ENCODE measurements at regions of chr15 and their contacts with region 1.

Region 1: GRCh38 chr15:63752075-63752684 is 81.6 kb downstream of the HERC1 start:
- DNase-seq: peak; percentile 54
- H3K4me3 ChIP-seq: no peak overlapping the region; a peak in 1 of 4 replicates
- H3K27ac ChIP-seq: no peak overlapping the region
- H3K4me1 ChIP-seq: no peaks in the 10 kb centered on the region; a peak in 1 of 4 replicates
- H3K27me3 ChIP-seq: no peaks in the 10 kb centered on the region
- CTCF ChIP-seq: peak; percentile 83
- EP300 ChIP-seq: no peak
- RAD21 ChIP-seq: peak; percentile 94

Region 2: GRCh38 chr15:63729115-63729884 is 22.9 kb before region 1 on chr15:
- CTCF ChIA-PET with region 1: interaction called, 13 read pairs
- POLR2A ChIA-PET with region 1: no interaction called
- DNase-seq: no peak
- H3K4me3 ChIP-seq: no peak overlapping the region
- H3K27ac ChIP-seq: no peak overlapping the region
- H3K4me1 ChIP-seq: peaks cover 0 to 4% of the 10 kb centered on the region in 2 experiments; a peak in 2 of 4 replicates
- H3K27me3 ChIP-seq: no peaks in the 10 kb centered on the region
- CTCF ChIP-seq: no peak
- EP300 ChIP-seq: no peak
- RAD21 ChIP-seq: no peak

Region 3: DNA sequence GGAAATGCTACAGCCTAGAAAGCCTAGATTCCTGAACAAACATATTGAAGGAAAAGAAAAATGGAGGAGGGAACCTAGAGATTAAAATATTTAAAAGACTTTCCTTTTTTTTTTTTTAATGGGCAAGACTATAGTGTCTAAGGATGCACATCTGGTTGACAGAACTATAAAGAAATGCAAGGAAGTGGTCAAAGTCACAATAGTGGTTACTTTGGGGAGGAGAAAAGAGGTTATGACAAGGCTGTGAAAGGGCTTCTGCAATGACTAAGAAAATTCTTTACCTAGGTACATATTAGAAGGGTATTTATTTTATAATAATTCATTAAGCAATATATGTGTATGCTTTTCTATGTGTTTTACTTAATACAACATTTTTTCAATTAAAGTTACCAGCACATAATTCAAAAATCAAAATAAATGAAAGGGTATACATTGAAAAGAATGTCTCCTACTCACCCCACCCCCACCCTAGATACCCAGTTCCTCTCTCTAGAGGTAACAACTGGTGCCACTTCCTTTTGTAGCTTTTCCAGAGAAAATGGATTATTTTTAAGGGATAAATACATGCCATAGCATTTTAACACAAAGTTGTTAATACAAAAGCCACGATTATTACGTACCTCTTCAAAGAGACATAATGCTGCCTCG is 11.4 kb after region 1 on chr15:
- CTCF ChIA-PET with region 1: interaction called, 33 read pairs
- POLR2A ChIA-PET with region 1: no interaction called
- DNase-seq: no peak
- H3K4me3 ChIP-seq: no peak overlapping the region
- H3K27ac ChIP-seq: no peak overlapping the region
- H3K4me1 ChIP-seq: peaks cover 0 to 5% of the 10 kb centered on the region in 2 experiments; a peak in 1 of 4 replicates
- H3K27me3 ChIP-seq: no peaks in the 10 kb centered on the region
- CTCF ChIP-seq: no peak
- EP300 ChIP-seq: no peak
- RAD21 ChIP-seq: no peak

Region 4: GRCh38 chr15:63833021-63833696 is 81.0 kb after region 1 on chr15:
- CTCF ChIA-PET with region 1: interaction called, 10 read pairs
- POLR2A ChIA-PET with region 1: no interaction called
- DNase-seq: peak; percentile 80
- H3K4me3 ChIP-seq: peak overlapping the region; percentile 89
- H3K27ac ChIP-seq: peak overlapping the region; percentile 64 to 95; a peak in 3 of 4 replicates
- H3K4me1 ChIP-seq: peaks cover 10 to 11% of the 10 kb centered on the region in 2 experiments; a peak in 3 of 4 replicates
- H3K27me3 ChIP-seq: no peaks in the 10 kb centered on the region
- CTCF ChIP-seq: no peak
- EP300 ChIP-seq: no peak
- RAD21 ChIP-seq: no peak

Region 5: GRCh38 chr15:63881431-63881830 is 129.3 kb after region 1 on chr15:
- CTCF ChIA-PET with region 1: interaction called, 15 read pairs
- POLR2A ChIA-PET with region 1: interaction called, 3 read pairs
- DNase-seq: no peak
- H3K4me3 ChIP-seq: no peak overlapping the region
- H3K27ac ChIP-seq: no peak overlapping the region
- H3K4me1 ChIP-seq: no peaks in the 10 kb centered on the region; a peak in 1 of 4 replicates
- H3K27me3 ChIP-seq: no peaks in the 10 kb centered on the region
- CTCF ChIP-seq: no peak
- EP300 ChIP-seq: no peak
- RAD21 ChIP-seq: no peak

Region 6: DNA sequence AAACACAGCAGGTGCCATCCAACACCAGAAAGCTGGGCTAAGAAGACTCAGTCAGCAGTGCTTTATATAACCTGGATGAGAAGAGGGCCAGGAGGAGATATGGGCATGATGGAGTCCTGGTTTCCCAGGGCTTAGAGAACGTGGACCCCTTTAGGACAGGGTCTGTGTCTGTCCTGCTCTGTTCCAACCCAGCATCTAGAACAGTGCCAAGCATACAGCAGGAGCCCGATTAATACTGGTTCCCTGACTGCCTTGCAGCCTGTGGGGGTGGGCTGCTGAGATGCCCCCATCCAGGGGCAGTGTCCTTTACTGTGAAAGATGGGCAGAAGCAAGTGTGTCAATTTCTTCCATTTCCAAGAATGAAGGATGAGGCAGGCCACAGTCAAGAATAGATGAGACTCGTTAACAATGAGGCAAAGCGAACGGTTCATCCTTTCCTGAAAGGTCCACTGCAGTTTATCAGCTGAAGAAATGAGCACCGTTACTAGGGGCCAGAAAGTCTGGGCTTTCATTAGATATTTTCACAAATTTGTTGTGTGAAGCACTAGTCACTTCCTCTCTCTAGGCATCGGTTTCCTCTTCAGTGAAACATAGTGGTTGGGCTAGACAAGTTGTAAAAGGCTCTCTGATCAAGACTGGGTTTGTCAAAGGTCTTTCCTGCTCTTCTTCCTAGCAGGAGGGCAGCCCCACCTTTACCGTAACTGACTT is 153.5 kb after region 1 on chr15:
- CTCF ChIA-PET with region 1: interaction called, 10 read pairs
- POLR2A ChIA-PET with region 1: no interaction called
- DNase-seq: no peak
- H3K4me3 ChIP-seq: no peak overlapping the region
- H3K27ac ChIP-seq: no peak overlapping the region
- H3K4me1 ChIP-seq: peaks cover 19 to 23% of the 10 kb centered on the region in 2 experiments; a peak in 3 of 4 replicates
- H3K27me3 ChIP-seq: no peaks in the 10 kb centered on the region
- CTCF ChIP-seq: no peak
- EP300 ChIP-seq: no peak
- RAD21 ChIP-seq: no peak

Region 7: DNA sequence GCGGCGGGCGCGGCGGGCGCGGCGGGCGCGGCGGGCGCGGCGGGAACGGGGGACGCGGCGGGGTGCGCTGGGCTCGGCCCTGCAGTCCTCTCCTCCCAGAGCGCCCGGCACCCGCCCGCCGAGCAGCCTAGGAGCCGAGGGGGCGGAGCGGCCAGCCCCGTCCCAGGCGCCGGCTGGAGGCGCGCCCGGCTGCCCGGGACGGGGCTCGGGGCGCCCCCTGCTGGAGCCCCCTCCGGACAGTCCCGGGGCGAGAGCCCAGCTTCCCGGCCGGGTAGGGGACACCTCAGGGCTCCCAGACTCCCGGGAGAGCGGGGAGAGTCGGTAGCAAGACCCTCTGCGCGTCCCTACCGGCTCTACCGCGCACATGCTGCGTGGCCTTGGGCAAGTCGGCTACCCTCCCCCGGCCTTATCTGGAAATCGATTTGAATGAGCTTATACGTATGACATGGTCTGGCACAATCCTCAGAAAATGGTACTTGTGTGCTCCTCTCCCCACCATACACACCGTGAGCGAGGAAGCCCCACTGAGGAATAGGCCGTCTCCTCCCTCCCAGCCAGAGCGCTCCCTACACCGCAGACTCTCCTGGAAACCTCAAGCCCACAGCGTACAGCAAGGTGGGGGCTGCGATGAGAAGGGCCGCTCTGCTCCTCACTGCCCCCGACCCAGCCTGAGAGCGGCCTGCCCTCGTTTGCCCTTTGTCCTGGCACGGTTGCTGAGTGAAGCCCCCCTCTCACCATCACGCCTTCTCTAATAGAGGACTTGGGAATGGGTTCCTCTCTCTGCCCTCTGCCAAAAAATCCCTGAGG is 294.4 kb after region 1 on chr15 and contains the start of gene DAPK2:
- CTCF ChIA-PET with region 1: interaction called, 34 read pairs
- POLR2A ChIA-PET with region 1: no interaction called
- DNase-seq: peak; percentile 97
- H3K4me3 ChIP-seq: peak within 1 kb of the TSS; percentile 61 to 64
- H3K27ac ChIP-seq: no peak within 1 kb of the TSS; a peak in 1 of 4 replicates
- H3K4me1 ChIP-seq: peaks cover 0 to 13% of the 10 kb centered on the region in 2 experiments; a peak in 1 of 4 replicates
- H3K27me3 ChIP-seq: no peaks in the 10 kb centered on the region
- CTCF ChIP-seq: peak; percentile 77
- EP300 ChIP-seq: no peak
- RAD21 ChIP-seq: peak; percentile 50
- polyA plus RNA-seq, gene DAPK2: 1.2 and 1.4 TPM in 2 replicates